WTC11 (cell line): ENCODE measurements at regions of chr7 and their contacts with region 1.

Region 1: GRCh38 chr7:28228396-28228795 is 47.8 kb upstream of the JAZF1 start:
- DNase-seq: no peak
- ATAC-seq: no peak
- H3K4me3 Mint-ChIP-seq: no peak overlapping the region
- H3K27ac Mint-ChIP-seq: no peak overlapping the region
- H3K4me1 Mint-ChIP-seq: peaks cover 53% of the 10 kb centered on the region
- H3K27me3 Mint-ChIP-seq: no peaks in the 10 kb centered on the region; the same call in 1 of the 2 replicates
- CTCF ChIP-seq: no peak

Region 2: DNA sequence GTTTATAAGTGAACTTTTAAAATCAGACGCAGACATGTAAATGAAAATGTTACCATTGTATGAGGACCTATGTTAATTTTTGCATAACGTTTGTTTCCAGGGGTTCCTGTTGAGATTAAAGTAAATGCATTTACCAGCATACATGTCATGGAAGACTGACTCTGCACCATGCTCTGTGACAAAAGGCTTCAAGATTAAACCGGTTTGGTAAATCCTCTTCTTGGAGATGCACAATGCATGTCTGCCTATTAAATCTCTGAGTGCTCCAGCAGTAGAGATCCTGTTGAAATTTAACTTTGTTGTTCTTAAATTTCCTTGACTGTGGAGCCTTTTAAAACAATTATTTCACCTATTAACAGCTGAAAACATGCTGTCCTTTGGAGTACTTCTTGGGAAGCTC is 11.3 kb before region 1 on chr7:
- CTCF ChIA-PET with region 1: no interaction called
- POLR2A ChIA-PET with region 1: interaction called, 11 read pairs
- DNase-seq: no peak
- ATAC-seq: no peak
- H3K4me3 Mint-ChIP-seq: no peak overlapping the region
- H3K27ac Mint-ChIP-seq: no peak overlapping the region
- H3K4me1 Mint-ChIP-seq: peaks cover 15% of the 10 kb centered on the region
- H3K27me3 Mint-ChIP-seq: no peaks in the 10 kb centered on the region
- CTCF ChIP-seq: no peak